GM10248 (cell line): ENCODE measurements at regions of chr15 and their contacts with region 1.

Region 1: DNA sequence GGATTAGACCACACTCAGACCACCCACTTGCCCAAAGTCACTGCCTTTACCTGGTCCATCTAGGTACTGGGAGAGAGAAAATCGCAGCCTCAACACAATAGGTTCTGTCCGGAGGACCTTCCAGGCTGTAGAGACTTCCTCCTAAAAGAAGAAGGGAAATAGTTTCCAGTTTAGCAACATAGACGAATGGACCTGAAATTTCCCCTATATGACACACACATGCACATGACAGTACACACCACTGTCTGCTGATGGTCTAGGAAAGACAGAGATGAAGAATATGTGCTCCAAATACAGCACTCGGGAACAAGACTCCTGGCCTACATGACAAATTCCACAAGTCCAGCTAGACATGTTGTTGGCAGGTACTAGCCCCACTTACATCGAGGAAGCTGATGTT is 7.3 kb downstream of the PARP6 start:
- DNase-seq: no peak
- CTCF ChIP-seq: no peak

Region 2: GRCh38 chr15:72136170-72137051 is 128.6 kb before region 1 on chr15:
- CTCF ChIA-PET with region 1: no interaction called
- POLR2A ChIA-PET with region 1: no interaction called
- DNase-seq: no peak
- CTCF ChIP-seq: no peak

Region 3: DNA sequence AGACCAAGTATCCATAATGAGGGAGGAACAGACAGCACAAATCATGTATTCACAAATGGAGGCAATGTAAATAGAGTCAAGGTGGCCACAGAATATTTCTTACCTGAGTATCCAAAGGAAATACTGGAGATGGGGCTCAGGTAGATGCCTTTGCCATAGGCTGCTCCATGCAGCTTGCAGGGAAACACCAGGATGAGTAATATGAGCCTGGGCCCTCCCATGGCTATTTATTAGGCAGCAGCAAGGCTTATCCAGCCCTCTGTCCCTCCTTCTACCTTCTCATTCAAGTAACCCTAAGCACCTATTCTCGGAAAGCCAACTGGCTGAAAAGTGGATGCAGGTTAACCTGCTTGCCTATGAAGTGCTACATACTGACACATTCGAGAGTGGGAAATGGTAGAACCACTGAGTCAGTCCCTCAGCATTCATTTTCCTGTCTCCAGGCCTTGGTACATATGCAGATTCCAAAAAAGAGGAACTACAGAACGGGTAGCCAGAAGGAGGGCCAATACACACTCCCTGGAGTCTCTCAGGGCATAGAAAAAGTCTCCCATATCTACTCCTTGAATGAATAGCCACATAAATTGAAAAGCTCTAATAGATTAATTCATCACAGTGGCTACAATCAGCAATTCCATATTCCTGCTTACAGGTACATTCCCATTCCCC is 15.8 kb before region 1 on chr15:
- CTCF ChIA-PET with region 1: interaction called, 11 read pairs
- POLR2A ChIA-PET with region 1: no interaction called
- DNase-seq: no peak
- CTCF ChIP-seq: no peak

Region 4: GRCh38 chr15:72599855-72600464 is 334.9 kb after region 1 on chr15:
- CTCF ChIA-PET with region 1: no interaction called
- POLR2A ChIA-PET with region 1: no interaction called
- DNase-seq: peak; percentile 45
- CTCF ChIP-seq: peak; percentile 73